ENCODE measurements at regions of chr1 and their contacts with region 1.

Region 1: GRCh38 chr1:174217787-174218574 is 58.7 kb downstream of the RABGAP1L start:
- DNase-seq: no peak
- H3K4me3 Mint-ChIP-seq: no peak overlapping the region
- H3K27ac Mint-ChIP-seq: no peak overlapping the region
- H3K4me1 Mint-ChIP-seq: peaks cover 6% of the 10 kb centered on the region
- H3K27me3 Mint-ChIP-seq: no peaks in the 10 kb centered on the region

Region 2: GRCh38 chr1:173714759-173715537 is 503.0 kb before region 1 on chr1 and contains the start of gene KLHL20:
- CTCF ChIA-PET with region 1: no interaction called
- intact Hi-C with region 1: loop called (anchors 10 kb)
- DNase-seq: peak; percentile 91
- H3K4me3 Mint-ChIP-seq: peak within 1 kb of the TSS; percentile 97
- H3K27ac Mint-ChIP-seq: peak within 1 kb of the TSS; percentile 96
- H3K4me1 Mint-ChIP-seq: peaks cover 9% of the 10 kb centered on the region
- H3K27me3 Mint-ChIP-seq: peaks cover 15% of the 10 kb centered on the region
- total RNA-seq, gene KLHL20: 13.0 to 14.9 TPM

Region 3: GRCh38 chr1:173832748-173833147 is 385.2 kb before region 1 on chr1:
- CTCF ChIA-PET with region 1: no interaction called
- intact Hi-C with region 1: loop called (anchors 2 kb)
- DNase-seq: no peak
- H3K4me3 Mint-ChIP-seq: no peak overlapping the region
- H3K27ac Mint-ChIP-seq: no peak overlapping the region
- H3K4me1 Mint-ChIP-seq: peaks cover 9% of the 10 kb centered on the region
- H3K27me3 Mint-ChIP-seq: no peaks in the 10 kb centered on the region

Region 4: DNA sequence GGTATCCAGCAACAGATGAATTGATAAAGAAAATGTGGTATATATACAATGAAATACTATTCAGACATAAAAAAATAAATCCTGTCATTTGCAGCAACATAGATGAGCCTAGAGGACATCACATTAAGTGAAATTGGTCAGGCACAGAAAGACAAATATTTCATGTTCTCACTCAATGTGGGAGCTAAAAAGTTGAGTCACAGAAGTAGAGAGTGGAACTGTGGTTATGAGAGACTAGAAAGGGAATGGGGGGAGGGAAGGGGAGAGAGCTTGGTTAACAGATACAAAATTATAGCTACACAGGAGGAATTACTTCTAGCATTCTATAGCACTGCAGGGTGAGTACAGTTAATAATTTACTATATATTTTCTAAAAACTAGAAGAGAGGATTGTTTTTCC is 263.8 kb before region 1 on chr1:
- CTCF ChIA-PET with region 1: no interaction called
- intact Hi-C with region 1: loop called (anchors 10 kb)
- DNase-seq: no peak
- H3K4me3 Mint-ChIP-seq: no peak overlapping the region
- H3K27ac Mint-ChIP-seq: no peak overlapping the region
- H3K4me1 Mint-ChIP-seq: peaks cover 17% of the 10 kb centered on the region
- H3K27me3 Mint-ChIP-seq: no peaks in the 10 kb centered on the region

Region 5: DNA sequence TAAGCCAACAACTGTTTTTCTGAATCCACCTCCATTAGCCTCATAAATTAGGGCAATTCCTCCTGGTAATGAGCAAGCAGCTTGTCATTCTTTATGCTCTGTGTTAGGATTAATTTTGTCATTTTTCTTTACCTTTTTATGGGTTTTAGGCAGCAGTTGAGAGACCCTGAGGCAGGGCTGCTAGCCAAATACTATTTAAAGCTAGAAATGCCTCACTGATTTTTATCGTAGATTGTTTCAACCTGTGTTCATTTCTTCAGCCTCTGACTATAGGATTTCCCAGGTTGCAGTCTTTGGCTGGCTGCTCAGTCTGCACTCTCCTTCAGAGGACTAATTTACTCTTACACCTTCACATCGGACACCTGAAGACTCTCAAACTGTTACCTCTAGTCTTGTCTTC is 120.6 kb before region 1 on chr1:
- CTCF ChIA-PET with region 1: interaction called, 7 read pairs
- intact Hi-C with region 1: loop called (anchors 1 kb)
- DNase-seq: no peak
- H3K4me3 Mint-ChIP-seq: no peak overlapping the region
- H3K27ac Mint-ChIP-seq: no peak overlapping the region
- H3K4me1 Mint-ChIP-seq: no peaks in the 10 kb centered on the region
- H3K27me3 Mint-ChIP-seq: peaks cover 2% of the 10 kb centered on the region

Region 6: GRCh38 chr1:174204697-174205308 is 13.2 kb before region 1 on chr1:
- CTCF ChIA-PET with region 1: interaction called, 23 read pairs
- intact Hi-C with region 1: no loop called
- DNase-seq: peak; percentile 25
- H3K4me3 Mint-ChIP-seq: no peak overlapping the region
- H3K27ac Mint-ChIP-seq: peak overlapping the region; percentile 55
- H3K4me1 Mint-ChIP-seq: peaks cover 48% of the 10 kb centered on the region
- H3K27me3 Mint-ChIP-seq: no peaks in the 10 kb centered on the region

Measured in activated naive CD4-positive, alpha-beta T cell treated with anti-CD3 and anti-CD28 coated beads for 36 hours (primary cell).